Left cardiac atrium (tissue), 4 donors: ENCODE measurements at regions of chr1 and their contacts with region 1.

Region 1: DNA sequence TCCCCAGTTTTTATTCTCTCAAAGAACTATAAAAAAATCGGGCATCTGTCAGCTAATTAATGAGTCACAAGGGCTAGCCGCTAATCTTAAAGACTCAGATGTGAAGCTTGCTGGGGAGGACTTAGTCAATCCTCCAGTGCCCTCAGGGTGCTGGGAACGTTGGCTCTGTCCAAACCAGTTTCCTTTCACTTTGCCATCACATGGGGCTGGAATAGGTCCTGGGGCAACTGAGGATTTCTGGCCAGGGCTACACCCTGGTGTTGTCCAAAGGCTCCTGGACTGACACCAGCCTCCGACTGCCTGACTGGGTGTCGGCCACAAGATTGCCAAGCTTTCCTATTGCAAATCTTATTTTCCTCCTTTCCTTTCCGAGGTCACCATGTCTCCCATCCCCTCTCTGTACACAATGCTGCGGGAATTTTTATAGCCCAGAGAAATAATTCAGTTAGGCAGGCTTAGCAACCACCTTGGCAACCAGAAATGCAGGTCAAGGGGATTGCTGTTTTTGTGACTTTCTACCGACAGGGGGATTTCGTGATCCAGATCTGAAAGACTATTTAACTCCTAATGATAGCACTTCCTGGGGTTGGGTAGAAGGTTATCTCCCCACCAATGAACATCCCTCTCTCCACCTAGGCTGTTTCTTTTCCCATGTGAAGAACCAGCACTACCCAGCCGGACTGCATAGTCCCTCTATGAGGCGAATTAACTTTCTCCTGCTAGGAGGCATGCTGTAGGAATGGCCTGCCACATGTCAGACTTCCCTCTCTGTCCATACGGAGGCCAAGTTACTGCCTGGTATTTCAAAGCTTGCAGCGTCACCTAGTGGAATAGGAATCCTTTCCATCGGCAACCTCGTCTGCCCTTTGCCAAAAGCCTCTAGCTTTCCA is 29.9 kb upstream of the CTBS start:
- DNase-seq: peak; percentile 56
- ATAC-seq: peak; percentile 86 to 89

Region 2: GRCh38 chr1:84442256-84442655 is 161.9 kb before region 1 on chr1:
- intact Hi-C with region 1: loop called in 1 of 2 experiments (anchors 5 kb)
- DNase-seq: no peak
- ATAC-seq: peak; percentile 80 to 94

Region 3: GRCh38 chr1:84525779-84526178 is 78.4 kb before region 1 on chr1:
- intact Hi-C with region 1: no loop called
- DNase-seq: no peak
- ATAC-seq: no peak

Region 4: GRCh38 chr1:84634643-84635205 is 30.5 kb after region 1 on chr1:
- intact Hi-C with region 1: no loop called
- DNase-seq: no peak
- ATAC-seq: no peak

Region 5: GRCh38 chr1:85015826-85016225 is 411.6 kb after region 1 on chr1:
- intact Hi-C with region 1: no loop called
- DNase-seq: no peak
- ATAC-seq: no peak